ENCODE measurements at regions of chrX and their contacts with region 1.

Region 1: GRCh38 chrX:40253771-40254170 is 156.0 kb upstream of the BCOR start:
- DNase-seq: no peak
- ATAC-seq: no peak
- H3K4me3 Mint-ChIP-seq: no peak overlapping the region
- H3K27ac Mint-ChIP-seq: no peak overlapping the region
- H3K4me1 Mint-ChIP-seq: no peaks in the 10 kb centered on the region
- H3K27me3 Mint-ChIP-seq: no peaks in the 10 kb centered on the region
- CTCF ChIP-seq: no peak

Region 2: DNA sequence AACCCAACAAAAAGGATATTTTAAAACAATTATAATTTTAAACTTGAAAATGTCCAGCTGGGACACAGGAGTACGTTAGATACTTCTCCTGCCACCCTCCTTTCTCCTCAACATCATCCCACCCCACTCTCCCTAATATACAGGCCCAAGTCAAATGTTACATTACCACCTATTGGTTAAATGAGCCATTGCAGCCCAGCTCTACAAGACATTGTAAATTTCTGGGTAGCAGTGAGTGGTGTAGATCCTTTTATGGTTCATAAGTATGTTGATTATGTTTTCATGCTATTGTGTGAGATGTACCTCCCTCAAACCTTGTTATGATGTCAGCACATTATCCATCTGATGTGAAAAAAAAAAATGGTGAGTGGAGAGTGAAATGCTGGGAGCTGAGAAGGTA is 31.1 kb after region 1 on chrX:
- CTCF ChIA-PET with region 1: no interaction called
- POLR2A ChIA-PET with region 1: no interaction called
- intact Hi-C with region 1: loop called (anchors 2 kb)
- DNase-seq: no peak
- ATAC-seq: no peak
- H3K4me3 Mint-ChIP-seq: no peak overlapping the region
- H3K27ac Mint-ChIP-seq: no peak overlapping the region
- H3K4me1 Mint-ChIP-seq: peaks cover 15% of the 10 kb centered on the region
- H3K27me3 Mint-ChIP-seq: no peaks in the 10 kb centered on the region
- CTCF ChIP-seq: no peak